CD4-positive, alpha-beta T cell (primary cell): ENCODE measurements at regions of chr1 and their contacts with region 1.

Region 1: GRCh38 chr1:23559136-23559984 is at the start of gene ID3:
- DNase-seq: peak; percentile 81 to 96 (median 92)
- ATAC-seq: peak; percentile 50
- H3K4me3 ChIP-seq: peak within 1 kb of the TSS; percentile 87
- H3K4me3 Mint-ChIP-seq: peak within 1 kb of the TSS; percentile 90
- H3K27ac ChIP-seq: peak within 1 kb of the TSS; percentile 61 to 86
- H3K27ac Mint-ChIP-seq: peak within 1 kb of the TSS; percentile 96
- H3K4me1 ChIP-seq: peaks cover 71% of the 10 kb centered on the region
- H3K4me1 Mint-ChIP-seq: peaks cover 79% of the 10 kb centered on the region
- H3K27me3 ChIP-seq: no peaks in the 10 kb centered on the region
- H3K27me3 Mint-ChIP-seq: no peaks in the 10 kb centered on the region
- CTCF ChIP-seq: no peak
- total RNA-seq, gene ID3: 89.8 to 90.4 TPM

Region 2: GRCh38 chr1:23539698-23540266 is 19.6 kb before region 1 on chr1:
- CTCF ChIA-PET with region 1: interaction called, 21 read pairs
- POLR2A ChIA-PET with region 1: interaction called, 19 read pairs
- intact Hi-C with region 1: no loop called
- DNase-seq: peak; percentile 86 to 96 (median 90)
- ATAC-seq: peak; percentile 96
- H3K4me3 ChIP-seq: no peak overlapping the region
- H3K4me3 Mint-ChIP-seq: peak overlapping the region; percentile 11
- H3K27ac ChIP-seq: no peak overlapping the region
- H3K27ac Mint-ChIP-seq: peak overlapping the region; percentile 50
- H3K4me1 ChIP-seq: peaks cover 17% of the 10 kb centered on the region
- H3K4me1 Mint-ChIP-seq: peaks cover 18% of the 10 kb centered on the region
- H3K27me3 ChIP-seq: no peaks in the 10 kb centered on the region
- H3K27me3 Mint-ChIP-seq: no peaks in the 10 kb centered on the region
- CTCF ChIP-seq: peak; percentile 94

Region 3: DNA sequence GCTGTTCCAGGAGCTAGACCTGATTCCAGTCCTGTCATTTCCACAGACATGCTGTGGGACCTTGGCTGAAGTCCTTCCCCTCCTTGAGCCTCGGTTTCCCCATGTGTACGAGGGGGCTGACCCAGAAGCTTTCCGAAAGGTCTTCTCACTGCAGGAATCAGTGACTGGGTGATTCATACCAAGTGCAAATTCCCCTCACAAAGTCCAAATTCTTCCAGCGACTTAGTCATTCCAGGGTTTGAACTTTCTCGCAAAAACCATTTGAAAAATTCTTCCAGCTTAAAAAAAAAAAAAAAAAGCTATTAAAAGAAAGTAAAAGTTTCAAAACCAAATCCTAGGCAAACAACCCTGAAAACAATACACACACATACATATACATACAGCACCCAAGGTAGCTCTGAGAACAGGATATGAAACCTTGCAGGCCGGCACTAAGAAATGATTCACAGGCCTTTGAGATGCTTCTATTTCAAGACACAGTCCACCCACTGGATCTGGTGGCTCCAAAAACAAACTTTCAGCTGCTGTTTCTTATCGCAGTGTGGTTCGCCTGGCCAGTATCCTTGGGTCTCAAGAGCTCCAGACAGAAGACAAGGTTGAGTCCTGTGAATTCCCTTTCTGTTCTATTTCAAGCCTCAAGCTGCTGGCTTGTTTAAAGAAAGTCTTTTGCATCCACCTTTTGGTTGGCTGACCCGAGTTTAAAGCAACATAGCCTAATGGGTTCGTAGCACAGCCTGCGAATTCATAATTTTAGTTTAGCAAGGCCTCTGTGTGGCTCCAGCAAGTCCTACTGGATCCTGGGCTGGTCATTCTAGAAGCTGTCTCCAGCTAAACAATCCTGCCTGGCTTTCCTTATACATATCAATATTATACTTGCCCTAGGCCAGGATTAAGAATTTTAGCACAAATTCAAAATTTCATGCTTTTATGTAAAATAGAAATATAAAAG is 18.0 kb after region 1 on chr1:
- CTCF ChIA-PET with region 1: interaction called, 3 read pairs
- POLR2A ChIA-PET with region 1: interaction called, 29 read pairs
- intact Hi-C with region 1: no loop called
- DNase-seq: peak in 2 of 14 experiments; percentile 44 to 52
- ATAC-seq: peak; percentile 81
- H3K4me3 ChIP-seq: no peak overlapping the region
- H3K4me3 Mint-ChIP-seq: peak overlapping the region; percentile 64
- H3K27ac ChIP-seq: peak overlapping the region in 1 of 2 donors; percentile 13
- H3K27ac Mint-ChIP-seq: peak overlapping the region; percentile 43
- H3K4me1 ChIP-seq: peaks cover 29% of the 10 kb centered on the region
- H3K4me1 Mint-ChIP-seq: peaks cover 56% of the 10 kb centered on the region
- H3K27me3 ChIP-seq: no peaks in the 10 kb centered on the region
- H3K27me3 Mint-ChIP-seq: no peaks in the 10 kb centered on the region
- CTCF ChIP-seq: no peak

Region 4: DNA sequence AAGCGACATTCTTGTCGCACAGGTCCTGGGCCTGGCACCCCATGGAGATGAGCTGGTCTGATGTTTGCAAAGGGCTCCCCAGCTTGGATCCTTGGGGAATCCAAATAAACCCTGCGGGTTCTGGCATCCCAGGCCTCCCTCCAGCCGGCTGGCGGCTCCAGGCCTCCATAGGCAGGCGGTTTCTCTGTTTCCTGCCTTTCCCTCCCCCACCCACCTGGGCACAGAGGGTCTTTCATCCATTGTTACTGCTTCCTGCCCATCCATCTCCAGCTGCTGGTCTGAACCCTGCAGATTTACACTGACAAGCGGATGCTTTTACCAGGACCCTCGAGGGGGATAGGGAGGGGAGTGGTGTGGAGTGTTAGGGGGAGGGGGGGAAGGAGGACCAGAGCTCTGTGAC is 39.1 kb after region 1 on chr1:
- CTCF ChIA-PET with region 1: interaction called, 5 read pairs
- POLR2A ChIA-PET with region 1: interaction called, 180 read pairs
- intact Hi-C with region 1: loop called in 1 of 2 experiments (anchors 2 kb)
- DNase-seq: no peak
- ATAC-seq: no peak
- H3K4me3 ChIP-seq: no peak overlapping the region
- H3K4me3 Mint-ChIP-seq: no peak overlapping the region
- H3K27ac ChIP-seq: peak overlapping the region in 1 of 2 donors; percentile 2
- H3K27ac Mint-ChIP-seq: peak overlapping the region; percentile 78
- H3K4me1 ChIP-seq: peaks cover 96% of the 10 kb centered on the region
- H3K4me1 Mint-ChIP-seq: peaks cover 88% of the 10 kb centered on the region
- H3K27me3 ChIP-seq: no peaks in the 10 kb centered on the region
- H3K27me3 Mint-ChIP-seq: no peaks in the 10 kb centered on the region
- CTCF ChIP-seq: no peak

Region 5: DNA sequence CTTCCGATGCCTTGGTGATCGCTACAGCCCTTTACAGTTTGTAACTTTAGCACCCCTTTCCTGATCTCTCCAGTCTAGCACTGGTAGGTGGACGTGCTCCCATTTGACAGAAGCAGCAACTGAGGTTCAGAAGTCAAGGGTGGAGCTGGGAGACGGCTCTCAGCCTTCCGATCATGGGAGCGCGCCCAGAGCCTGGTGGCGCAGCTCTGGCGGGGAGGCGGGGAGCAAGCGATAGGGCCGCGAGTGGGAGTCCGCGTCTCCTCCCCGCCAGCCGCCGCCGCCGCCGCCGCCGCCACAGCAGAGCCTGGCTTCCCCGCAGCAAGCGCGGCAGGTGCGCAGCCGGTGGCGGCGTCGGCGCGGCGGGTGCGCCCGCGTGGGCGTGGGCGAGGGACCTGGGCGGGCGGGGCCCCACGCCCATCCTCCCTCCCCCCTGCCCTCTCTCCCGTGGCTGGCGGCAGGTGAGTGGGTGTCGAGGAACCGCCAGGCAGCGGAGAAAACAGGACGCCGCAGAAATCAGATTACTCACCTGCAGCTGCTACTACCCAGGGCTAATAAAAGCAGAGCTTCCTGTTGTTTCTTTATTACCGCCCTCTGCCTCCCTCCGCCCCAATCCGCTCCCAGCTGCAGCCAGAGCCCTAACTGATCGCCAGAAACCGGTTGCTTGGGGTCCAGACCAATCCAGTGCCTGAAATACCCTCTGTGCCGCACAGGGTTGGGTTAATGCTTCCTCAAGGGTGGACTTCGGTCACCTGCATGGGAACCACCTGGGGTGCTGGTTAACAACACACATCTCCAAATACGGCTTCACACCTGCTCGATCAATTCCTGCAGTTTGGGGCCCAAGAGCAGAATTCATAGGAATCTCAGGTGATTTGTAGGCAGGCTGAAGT is 60.2 kb after region 1 on chr1:
- CTCF ChIA-PET with region 1: interaction called, 17 read pairs
- POLR2A ChIA-PET with region 1: interaction called, 267 read pairs
- intact Hi-C with region 1: loop called (anchors 1 to 2 kb)
- DNase-seq: peak; percentile 75 to 96 (median 89)
- ATAC-seq: peak; percentile 87
- H3K4me3 ChIP-seq: peak overlapping the region; percentile 62
- H3K4me3 Mint-ChIP-seq: peak overlapping the region; percentile 78
- H3K27ac ChIP-seq: peak overlapping the region; percentile 77 to 82
- H3K27ac Mint-ChIP-seq: peak overlapping the region; percentile 97
- H3K4me1 ChIP-seq: peaks cover 88% of the 10 kb centered on the region
- H3K4me1 Mint-ChIP-seq: peaks cover 94% of the 10 kb centered on the region
- H3K27me3 ChIP-seq: no peaks in the 10 kb centered on the region
- H3K27me3 Mint-ChIP-seq: no peaks in the 10 kb centered on the region
- CTCF ChIP-seq: no peak

Region 6: GRCh38 chr1:23634842-23635651 is 75.7 kb after region 1 on chr1:
- CTCF ChIA-PET with region 1: interaction called, 81 read pairs
- POLR2A ChIA-PET with region 1: interaction called, 314 read pairs
- intact Hi-C with region 1: no loop called
- DNase-seq: peak in 11 of 14 experiments; percentile 29 to 84 (median 45)
- ATAC-seq: peak; percentile 92
- H3K4me3 ChIP-seq: peak overlapping the region; percentile 48
- H3K4me3 Mint-ChIP-seq: peak overlapping the region; percentile 11
- H3K27ac ChIP-seq: peak overlapping the region in 1 of 2 donors; percentile 32
- H3K27ac Mint-ChIP-seq: peak overlapping the region; percentile 81
- H3K4me1 ChIP-seq: peaks cover 25% of the 10 kb centered on the region
- H3K4me1 Mint-ChIP-seq: peaks cover 33% of the 10 kb centered on the region
- H3K27me3 ChIP-seq: no peaks in the 10 kb centered on the region
- H3K27me3 Mint-ChIP-seq: no peaks in the 10 kb centered on the region
- CTCF ChIP-seq: peak; percentile 84